RWPE1 (cell line): ENCODE measurements at regions of chr19 and their contacts with region 1.

Region 1: DNA sequence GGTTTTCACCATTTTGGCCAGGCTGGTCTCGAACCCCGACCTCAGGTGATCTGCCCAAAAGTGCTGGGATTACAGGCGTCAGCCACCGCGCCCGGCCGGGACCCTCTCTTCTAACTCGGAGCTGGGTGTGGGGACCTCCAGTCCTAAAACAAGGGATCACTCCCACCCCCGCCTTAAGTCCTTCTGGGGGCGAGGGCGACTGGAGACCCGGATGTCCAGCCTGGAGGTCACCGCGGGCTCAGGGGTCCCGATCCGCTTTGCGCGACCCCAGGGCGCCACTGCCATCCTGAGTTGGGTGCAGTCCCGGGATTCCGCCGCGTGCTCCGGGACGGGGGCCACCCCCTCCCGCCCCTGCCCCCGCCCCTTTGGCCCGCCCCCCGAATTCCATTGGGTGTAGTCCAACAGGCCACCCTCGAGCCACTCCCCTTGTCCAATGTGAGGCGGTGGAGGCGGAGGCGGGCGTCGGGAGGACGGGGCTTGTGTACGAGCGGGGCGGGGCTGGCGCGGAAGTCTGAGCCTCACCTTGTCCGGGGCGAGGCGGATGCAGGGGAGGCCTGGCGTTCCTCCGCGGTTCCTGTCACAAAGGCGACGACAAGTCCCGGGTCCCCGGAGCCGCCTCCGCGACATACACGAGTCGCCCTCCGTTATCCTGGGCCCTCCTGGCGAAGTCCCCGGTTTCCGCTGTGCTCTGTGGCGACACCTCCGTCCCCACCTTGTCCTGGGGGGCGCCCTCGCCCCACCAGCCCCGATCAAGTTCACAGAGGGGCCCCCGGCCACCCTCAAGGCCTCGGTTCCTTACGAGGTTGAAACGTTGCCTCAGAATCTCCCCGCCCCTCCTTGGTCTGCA is 1.0 kb downstream of the LDLR start:
- DNase-seq: peak; percentile 90
- H3K27ac ChIP-seq: peak overlapping the region; percentile 98
- CTCF ChIP-seq: no peak

Region 2: DNA sequence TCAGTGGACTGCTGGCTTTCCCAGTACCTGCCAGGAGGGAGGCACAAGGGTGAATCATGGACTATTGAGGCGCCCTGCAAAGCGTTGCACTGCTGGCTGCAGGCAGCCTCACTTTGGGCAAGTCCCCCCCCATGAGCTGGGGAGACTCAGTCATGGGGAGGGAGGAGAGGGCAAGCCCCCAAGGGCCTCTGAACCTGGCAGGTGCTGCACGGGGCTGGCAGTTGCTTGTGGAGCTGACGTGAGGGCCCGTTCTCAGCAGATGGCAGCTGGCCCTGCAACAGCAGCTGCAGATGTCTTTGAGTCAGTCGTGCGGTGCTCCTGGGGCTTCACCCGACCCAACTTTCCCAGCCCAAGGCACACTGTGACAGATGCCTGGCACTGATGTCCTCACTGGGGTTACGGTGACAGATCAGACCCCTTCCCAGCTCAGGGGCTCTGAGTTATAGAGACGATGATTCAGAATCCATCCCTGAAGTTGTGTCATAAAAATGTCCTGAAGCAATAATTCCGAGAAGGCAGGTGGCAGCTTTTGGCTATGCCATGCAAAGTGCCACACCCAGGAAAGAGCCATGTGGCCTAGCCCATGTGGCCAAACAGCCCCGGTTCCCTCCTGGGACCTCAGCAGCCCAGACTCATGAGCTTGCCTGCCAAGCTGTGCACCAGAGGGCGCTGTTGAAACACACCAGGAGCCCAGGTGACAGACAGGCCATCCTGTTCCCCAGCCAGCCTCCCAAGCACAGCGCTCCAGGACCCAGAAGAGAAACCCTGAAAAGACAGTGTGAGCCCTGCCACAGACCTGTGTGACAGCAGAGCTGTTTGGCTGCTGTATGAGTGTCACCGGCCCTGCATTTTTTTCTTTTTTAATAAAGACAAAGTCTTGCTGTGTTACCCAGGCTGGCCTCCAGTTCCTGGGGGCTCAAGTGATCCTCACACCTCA is 54.6 kb before region 1 on chr19:
- CTCF ChIA-PET with region 1: interaction called, 12 read pairs
- POLR2A ChIA-PET with region 1: interaction called, 3 read pairs
- DNase-seq: peak; percentile 91
- H3K27ac ChIP-seq: peak overlapping the region; percentile 93
- CTCF ChIP-seq: peak; percentile 95

Region 3: DNA sequence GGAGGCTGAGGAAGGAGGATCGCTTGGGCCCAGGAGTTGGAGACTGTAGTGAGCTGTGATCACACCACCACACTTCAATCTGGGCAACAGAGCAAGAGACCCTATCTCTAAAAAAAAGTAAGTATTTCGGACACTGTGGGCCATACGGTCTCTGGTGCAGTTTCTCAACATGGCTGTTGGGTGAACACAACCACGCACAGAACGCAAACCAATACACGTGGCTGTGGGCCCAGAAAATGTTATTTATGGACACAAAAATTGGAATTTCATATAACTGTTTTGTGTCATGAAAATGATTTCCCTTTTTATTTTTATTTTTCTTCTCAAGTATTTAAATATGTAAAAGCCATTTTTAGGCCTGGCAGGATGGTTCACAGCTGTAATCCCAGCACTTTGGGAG is 18.5 kb after region 1 on chr19:
- CTCF ChIA-PET with region 1: no interaction called
- POLR2A ChIA-PET with region 1: interaction called, 10 read pairs
- DNase-seq: no peak
- H3K27ac ChIP-seq: peak overlapping the region; percentile 80
- CTCF ChIP-seq: no peak